ENCODE measurements at regions of chr12 and their contacts with region 1.

Region 1: DNA sequence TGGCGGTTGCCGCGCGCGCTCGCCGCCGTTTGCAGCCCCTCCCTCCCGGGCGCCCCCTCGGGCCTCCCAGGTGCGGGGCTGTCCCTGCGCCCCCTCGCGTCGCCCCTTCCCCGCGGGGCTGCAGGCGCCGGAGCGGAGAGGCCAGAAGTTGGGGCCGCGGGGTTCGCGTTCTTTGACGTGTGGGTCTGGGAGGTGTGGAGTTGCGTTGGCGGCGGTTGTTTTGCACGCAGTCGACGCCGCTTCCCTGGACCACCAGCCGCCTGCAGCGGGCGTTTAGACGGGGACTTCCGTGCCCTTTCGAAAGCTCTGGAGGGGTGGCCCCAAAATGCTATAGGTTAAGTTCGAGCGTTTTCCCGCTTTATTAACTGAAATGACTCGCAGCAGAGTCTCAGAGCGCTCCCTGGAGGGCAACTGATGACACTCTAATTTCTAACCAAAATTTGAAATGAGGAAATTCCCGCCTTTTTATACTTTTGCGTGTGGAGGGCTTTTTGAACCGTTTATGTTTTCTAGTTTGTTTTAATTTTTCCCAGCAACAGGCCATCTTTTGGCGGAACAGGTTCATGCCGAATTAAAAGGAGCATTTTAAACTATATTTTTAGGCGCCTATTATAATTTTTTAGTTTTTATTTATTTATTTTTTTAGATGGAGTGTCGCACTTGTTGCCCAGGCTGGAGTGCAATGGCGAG is 939 bp downstream of the TMPO start:
- DNase-seq: peak; percentile 83
- H3K4me3 ChIP-seq: peak overlapping the region; percentile 90 to 99
- H3K27ac ChIP-seq: peak overlapping the region; percentile 96 to 99
- H3K4me1 ChIP-seq: peaks cover 17% of the 10 kb centered on the region
- H3K27me3 ChIP-seq: no peaks in the 10 kb centered on the region
- CTCF ChIP-seq: peak in 2 of 3 experiments; percentile 42 to 58
- POLR2A ChIP-seq: no peak

Region 2: GRCh38 chr12:98317939-98318899 is 198.1 kb before region 1 on chr12:
- intact Hi-C with region 1: no loop called
- DNase-seq: no peak
- H3K4me3 ChIP-seq: no peak overlapping the region
- H3K27ac ChIP-seq: no peak overlapping the region
- H3K4me1 ChIP-seq: no peaks in the 10 kb centered on the region
- H3K27me3 ChIP-seq: no peaks in the 10 kb centered on the region
- CTCF ChIP-seq: no peak
- POLR2A ChIP-seq: no peak

Region 3: GRCh38 chr12:98424726-98425401 is 91.5 kb before region 1 on chr12:
- intact Hi-C with region 1: loop called (anchors 10 kb)
- DNase-seq: peak; percentile 85
- H3K4me3 ChIP-seq: no peak overlapping the region
- H3K27ac ChIP-seq: no peak overlapping the region
- H3K4me1 ChIP-seq: peaks cover 6% of the 10 kb centered on the region
- H3K27me3 ChIP-seq: no peaks in the 10 kb centered on the region
- CTCF ChIP-seq: peak; percentile 63 to 82 (median 78)
- POLR2A ChIP-seq: no peak

Measured in testis (tissue), 5 donors.